ENCODE measurements at regions of chr3 and their contacts with region 1.

Region 1: DNA sequence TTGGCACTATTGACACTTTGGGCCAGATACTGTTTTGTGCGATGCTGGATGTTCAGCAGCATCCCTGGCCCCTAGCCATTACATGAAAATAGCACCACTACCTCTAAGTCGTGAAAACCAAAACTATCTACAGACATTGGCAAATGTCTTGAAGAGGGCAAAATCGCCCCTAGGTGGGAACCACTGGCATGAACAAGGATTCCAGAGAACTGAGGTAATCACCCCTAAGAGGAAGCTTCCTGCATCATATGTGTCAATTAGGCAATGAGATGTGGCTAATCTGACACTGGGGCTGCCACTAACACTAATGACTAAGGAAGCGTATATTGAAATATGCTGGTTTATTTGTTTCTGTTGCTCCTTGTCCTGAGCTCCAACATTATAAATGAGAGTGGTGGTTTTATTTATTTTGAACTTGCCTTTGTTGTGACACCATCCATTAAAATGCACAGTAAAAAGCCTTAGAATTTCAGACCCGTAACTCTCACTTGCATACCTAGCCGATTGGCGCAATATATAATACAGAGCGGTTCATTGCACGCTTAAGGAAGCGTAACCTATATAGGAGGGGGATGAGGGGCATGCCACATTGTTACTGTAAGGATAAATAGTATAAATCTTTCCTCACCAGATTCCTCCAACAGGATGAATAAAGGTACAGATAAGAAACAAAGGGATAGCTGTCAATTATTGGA is 299.8 kb upstream of the CNTN4 start:
- DNase-seq: no peak
- ATAC-seq: no peak
- H3K4me3 ChIP-seq: no peak overlapping the region
- H3K4me3 Mint-ChIP-seq: no peak overlapping the region
- H3K27ac ChIP-seq: no peak overlapping the region
- H3K27ac Mint-ChIP-seq: no peak overlapping the region
- H3K4me1 ChIP-seq: no peaks in the 10 kb centered on the region
- H3K4me1 Mint-ChIP-seq: no peaks in the 10 kb centered on the region
- H3K27me3 ChIP-seq: no peaks in the 10 kb centered on the region
- H3K27me3 Mint-ChIP-seq: no peaks in the 10 kb centered on the region
- CTCF ChIP-seq: no peak

Region 2: GRCh38 chr3:1692428-1692827 is 106.4 kb before region 1 on chr3:
- CTCF ChIA-PET with region 1: no interaction called
- POLR2A ChIA-PET with region 1: no interaction called
- intact Hi-C with region 1: no loop called
- DNase-seq: no peak
- ATAC-seq: no peak
- H3K4me3 ChIP-seq: no peak overlapping the region
- H3K4me3 Mint-ChIP-seq: no peak overlapping the region
- H3K27ac ChIP-seq: no peak overlapping the region
- H3K27ac Mint-ChIP-seq: no peak overlapping the region
- H3K4me1 ChIP-seq: no peaks in the 10 kb centered on the region
- H3K4me1 Mint-ChIP-seq: no peaks in the 10 kb centered on the region
- H3K27me3 ChIP-seq: no peaks in the 10 kb centered on the region
- H3K27me3 Mint-ChIP-seq: no peaks in the 10 kb centered on the region
- CTCF ChIP-seq: no peak

Region 3: GRCh38 chr3:1843111-1843510 is 44.3 kb after region 1 on chr3:
- CTCF ChIA-PET with region 1: no interaction called
- POLR2A ChIA-PET with region 1: no interaction called
- intact Hi-C with region 1: loop called in 1 of 2 experiments (anchors 1 kb)
- DNase-seq: no peak
- ATAC-seq: no peak
- H3K4me3 ChIP-seq: no peak overlapping the region
- H3K4me3 Mint-ChIP-seq: no peak overlapping the region
- H3K27ac ChIP-seq: no peak overlapping the region
- H3K27ac Mint-ChIP-seq: no peak overlapping the region
- H3K4me1 ChIP-seq: no peaks in the 10 kb centered on the region
- H3K4me1 Mint-ChIP-seq: no peaks in the 10 kb centered on the region
- H3K27me3 ChIP-seq: no peaks in the 10 kb centered on the region
- H3K27me3 Mint-ChIP-seq: no peaks in the 10 kb centered on the region
- CTCF ChIP-seq: no peak

Region 4: GRCh38 chr3:1883488-1883887 is 84.6 kb after region 1 on chr3:
- CTCF ChIA-PET with region 1: no interaction called
- POLR2A ChIA-PET with region 1: no interaction called
- intact Hi-C with region 1: no loop called
- DNase-seq: no peak
- ATAC-seq: no peak
- H3K4me3 ChIP-seq: no peak overlapping the region
- H3K4me3 Mint-ChIP-seq: no peak overlapping the region
- H3K27ac ChIP-seq: no peak overlapping the region
- H3K27ac Mint-ChIP-seq: no peak overlapping the region
- H3K4me1 ChIP-seq: no peaks in the 10 kb centered on the region
- H3K4me1 Mint-ChIP-seq: no peaks in the 10 kb centered on the region
- H3K27me3 ChIP-seq: no peaks in the 10 kb centered on the region
- H3K27me3 Mint-ChIP-seq: no peaks in the 10 kb centered on the region
- CTCF ChIP-seq: no peak

Region 5: GRCh38 chr3:2517500-2518172 is 718.8 kb after region 1 on chr3:
- CTCF ChIA-PET with region 1: no interaction called
- POLR2A ChIA-PET with region 1: no interaction called
- intact Hi-C with region 1: no loop called
- DNase-seq: no peak
- ATAC-seq: no peak
- H3K4me3 ChIP-seq: no peak overlapping the region
- H3K4me3 Mint-ChIP-seq: no peak overlapping the region
- H3K27ac ChIP-seq: no peak overlapping the region
- H3K27ac Mint-ChIP-seq: no peak overlapping the region
- H3K4me1 ChIP-seq: no peaks in the 10 kb centered on the region
- H3K4me1 Mint-ChIP-seq: no peaks in the 10 kb centered on the region
- H3K27me3 ChIP-seq: no peaks in the 10 kb centered on the region
- H3K27me3 Mint-ChIP-seq: no peaks in the 10 kb centered on the region
- CTCF ChIP-seq: no peak